ENCODE measurements at regions of chr7 and their contacts with region 1.

Region 1: GRCh38 chr7:132580717-132581285 is 4.5 kb upstream of the PLXNA4 start:
- DNase-seq: no peak
- H3K4me3 ChIP-seq: no peak overlapping the region
- H3K27me3 ChIP-seq: peaks cover 20% of the 10 kb centered on the region
- CTCF ChIP-seq: peak; percentile 73

Region 2: GRCh38 chr7:131816391-131817007 is 764.3 kb before region 1 on chr7:
- CTCF ChIA-PET with region 1: no interaction called
- POLR2A ChIA-PET with region 1: no interaction called
- DNase-seq: no peak
- H3K4me3 ChIP-seq: no peak overlapping the region
- H3K27me3 ChIP-seq: no peaks in the 10 kb centered on the region
- CTCF ChIP-seq: no peak

Region 3: GRCh38 chr7:132318352-132319318 is 262.2 kb before region 1 on chr7:
- CTCF ChIA-PET with region 1: interaction called, 21 read pairs
- POLR2A ChIA-PET with region 1: no interaction called
- DNase-seq: peak; percentile 4
- H3K4me3 ChIP-seq: no peak overlapping the region
- H3K27me3 ChIP-seq: peaks cover 3% of the 10 kb centered on the region; the same call in 1 of the 2 replicates
- CTCF ChIP-seq: peak; percentile 92

Region 4: GRCh38 chr7:132568962-132569361 is 11.8 kb before region 1 on chr7:
- CTCF ChIA-PET with region 1: interaction called, 16 read pairs
- POLR2A ChIA-PET with region 1: no interaction called
- DNase-seq: no peak
- H3K4me3 ChIP-seq: no peak overlapping the region
- H3K27me3 ChIP-seq: peaks cover 12% of the 10 kb centered on the region
- CTCF ChIP-seq: no peak

Measured in BJ (cell line).